PC-3 (cell line): ENCODE measurements at regions of chr11 and their contacts with region 1.

Region 1: GRCh38 chr11:11028017-11028692 is 170.3 kb upstream of the ZBED5 start:
- DNase-seq: peak; percentile 73
- ATAC-seq: peak; percentile 87
- H3K4me3 ChIP-seq: no peak overlapping the region
- H3K27ac ChIP-seq: no peak overlapping the region
- H3K4me1 ChIP-seq: peaks cover 17% of the 10 kb centered on the region
- H3K27me3 ChIP-seq: 0 out of 2 replicates have a peak, but pooled peaks cover 3% of the 10 kb centered on the region
- CTCF ChIP-seq: peak; percentile 93

Region 2: DNA sequence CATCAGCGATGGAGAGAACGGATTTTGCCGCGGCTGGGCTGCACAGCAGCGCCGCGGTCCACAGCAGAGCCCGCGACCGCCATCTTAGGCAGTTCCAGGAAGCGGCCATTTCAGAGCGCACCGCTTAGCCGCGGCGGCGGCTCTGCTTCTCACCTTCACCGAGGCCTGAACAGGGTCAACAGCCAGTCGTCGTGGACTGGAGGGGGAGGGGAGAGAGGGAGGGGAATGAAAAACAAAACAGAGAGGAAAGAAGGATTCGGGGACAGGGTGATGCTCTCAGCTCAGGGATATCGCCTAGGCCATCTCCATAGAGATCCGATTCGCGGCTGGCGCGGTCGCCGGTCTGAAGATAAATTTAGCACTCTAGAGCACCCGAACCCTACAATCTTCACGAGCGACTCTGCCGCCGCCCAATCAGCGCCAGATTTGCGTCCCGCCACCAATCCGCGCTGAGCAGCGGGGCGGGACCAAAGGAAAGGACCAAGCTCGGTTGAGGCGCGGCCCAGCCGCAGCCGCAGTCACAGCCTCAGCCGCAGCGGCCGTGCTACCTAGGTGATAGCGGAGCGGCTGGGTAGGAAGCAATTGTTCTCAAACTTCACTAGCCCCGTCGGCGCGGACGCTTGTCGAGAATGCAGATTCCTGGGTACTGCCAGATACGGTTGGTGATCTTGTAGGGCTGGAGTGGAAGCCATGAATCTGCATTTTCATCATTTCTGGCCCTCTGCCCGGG is 170.3 kb before region 1 on chr11 and contains the start of gene ZBED5:
- CTCF ChIA-PET with region 1: no interaction called
- POLR2A ChIA-PET with region 1: no interaction called
- intact Hi-C with region 1: loop called (anchors 10 kb)
- DNase-seq: peak; percentile 97
- ATAC-seq: peak; percentile 93
- H3K4me3 ChIP-seq: peak within 1 kb of the TSS; percentile 76
- H3K27ac ChIP-seq: peak within 1 kb of the TSS; percentile 91
- H3K4me1 ChIP-seq: peaks cover 38% of the 10 kb centered on the region
- H3K27me3 ChIP-seq: no peaks in the 10 kb centered on the region
- CTCF ChIP-seq: no peak; the same call in 1 of the 2 replicates
- total RNA-seq, gene ZBED5: 19.5 and 21.0 TPM in 2 replicates

Region 3: GRCh38 chr11:11078344-11079086 is 50.4 kb after region 1 on chr11:
- CTCF ChIA-PET with region 1: interaction called, 14 read pairs
- POLR2A ChIA-PET with region 1: no interaction called
- intact Hi-C with region 1: no loop called
- DNase-seq: peak; percentile 23
- ATAC-seq: peak; percentile 51
- H3K4me3 ChIP-seq: no peak overlapping the region
- H3K27ac ChIP-seq: no peak overlapping the region
- H3K4me1 ChIP-seq: no peaks in the 10 kb centered on the region
- H3K27me3 ChIP-seq: peaks cover 29% of the 10 kb centered on the region
- CTCF ChIP-seq: peak; percentile 45; the same call in 1 of the 2 replicates